Natural killer cell (primary cell): ENCODE measurements at regions of chr17 and their contacts with region 1.

Region 1: DNA sequence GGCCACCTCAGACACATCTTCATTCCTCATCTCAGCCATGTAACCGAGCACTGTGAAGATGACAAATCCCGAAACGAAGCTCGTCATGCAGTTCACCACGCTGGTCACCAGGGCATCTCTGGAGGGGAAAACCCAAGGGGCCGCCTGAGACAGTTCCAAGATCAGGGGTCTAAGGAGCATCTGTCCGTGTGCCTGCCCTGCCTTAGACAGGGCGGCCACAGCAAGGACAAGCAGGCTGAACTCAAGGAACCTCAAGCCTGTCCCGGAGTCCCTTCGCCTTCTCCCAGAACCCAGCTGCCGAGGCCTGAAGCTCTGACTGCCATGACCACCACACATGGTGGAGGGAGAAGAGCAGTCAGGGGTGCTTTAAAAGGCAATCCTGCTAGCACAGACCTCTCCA is 22.7 kb downstream of the SLC6A4 start:
- DNase-seq: no peak
- ATAC-seq: no peak
- H3K4me3 ChIP-seq: no peak overlapping the region
- H3K4me3 Mint-ChIP-seq: no peak overlapping the region
- H3K27ac ChIP-seq: no peak overlapping the region
- H3K27ac Mint-ChIP-seq: peak overlapping the region; percentile 29 to 91
- H3K4me1 ChIP-seq: peaks cover 11% of the 10 kb centered on the region
- H3K4me1 Mint-ChIP-seq: peaks cover 22 to 42% of the 10 kb centered on the region in 2 donors
- H3K27me3 ChIP-seq: no peaks in the 10 kb centered on the region
- H3K27me3 Mint-ChIP-seq: peaks cover 2 to 6% of the 10 kb centered on the region in 2 donors
- CTCF ChIP-seq: no peak

Region 2: GRCh38 chr17:30236766-30237165 is 24.0 kb after region 1 on chr17:
- intact Hi-C with region 1: no loop called
- DNase-seq: no peak
- ATAC-seq: peak in 1 of 3 donors; percentile 38
- H3K4me3 ChIP-seq: no peak overlapping the region
- H3K4me3 Mint-ChIP-seq: peak overlapping the region; percentile 45
- H3K27ac ChIP-seq: no peak overlapping the region
- H3K27ac Mint-ChIP-seq: no peak overlapping the region
- H3K4me1 ChIP-seq: peaks cover 39% of the 10 kb centered on the region
- H3K4me1 Mint-ChIP-seq: peaks cover 13 to 54% of the 10 kb centered on the region in 2 donors
- H3K27me3 ChIP-seq: peaks cover 34% of the 10 kb centered on the region
- H3K27me3 Mint-ChIP-seq: peaks cover 43% of the 10 kb centered on the region in 2 donors
- CTCF ChIP-seq: no peak

Region 3: GRCh38 chr17:30291543-30292285 is 79.0 kb after region 1 on chr17 and contains the start of gene BLMH:
- intact Hi-C with region 1: loop called (anchors 1 kb)
- DNase-seq: peak; percentile 79 to 87
- ATAC-seq: peak; percentile 94 to 95 (median 94)
- H3K4me3 ChIP-seq: peak within 1 kb of the TSS; percentile 63
- H3K4me3 Mint-ChIP-seq: peak within 1 kb of the TSS; percentile 85
- H3K27ac ChIP-seq: peak within 1 kb of the TSS; percentile 42
- H3K27ac Mint-ChIP-seq: peak within 1 kb of the TSS in 1 of 2 donors; percentile 41
- H3K4me1 ChIP-seq: peaks cover 9% of the 10 kb centered on the region
- H3K4me1 Mint-ChIP-seq: peaks cover 12 to 13% of the 10 kb centered on the region in 2 donors
- H3K27me3 ChIP-seq: no peaks in the 10 kb centered on the region
- H3K27me3 Mint-ChIP-seq: no peaks in the 10 kb centered on the region
- CTCF ChIP-seq: no peak
- total RNA-seq, gene BLMH: 44.8 to 52.8 (median 46.7) TPM

Region 4: GRCh38 chr17:30363715-30364202 is 151.0 kb after region 1 on chr17:
- intact Hi-C with region 1: loop called (anchors 10 kb)
- DNase-seq: peak; percentile 66 to 90
- ATAC-seq: peak; percentile 84 to 93 (median 90)
- H3K4me3 ChIP-seq: no peak overlapping the region
- H3K4me3 Mint-ChIP-seq: peak overlapping the region; percentile 76
- H3K27ac ChIP-seq: no peak overlapping the region
- H3K27ac Mint-ChIP-seq: peak overlapping the region; percentile 85 to 89
- H3K4me1 ChIP-seq: peaks cover 30% of the 10 kb centered on the region
- H3K4me1 Mint-ChIP-seq: peaks cover 43% of the 10 kb centered on the region in 2 donors
- H3K27me3 ChIP-seq: no peaks in the 10 kb centered on the region
- H3K27me3 Mint-ChIP-seq: no peaks in the 10 kb centered on the region
- CTCF ChIP-seq: no peak